Dorsolateral prefrontal cortex (tissue), 120 donors: ENCODE measurements at regions of chr7 and their contacts with region 1.

Region 1: GRCh38 chr7:44477063-44477830 is 13.2 kb downstream of the NUDCD3 start:
- DNase-seq: peak in 9 of 10 donors; percentile 34 to 69 (median 61)
- H3K4me3 ChIP-seq: peak overlapping the region in 1 of 59 donors; percentile 14
- H3K27ac ChIP-seq: peak overlapping the region in 48 of 59 donors; percentile 6 to 80 (median 55)
- H3K27me3 ChIP-seq: no peaks in the 10 kb centered on the region
- CTCF ChIP-seq: peak; percentile 82 to 99 (median 95)

Region 2: GRCh38 chr7:44072364-44073231 is 404.6 kb before region 1 on chr7:
- intact Hi-C with region 1: loop called in 1 of 2 experiments (anchors 10 kb)
- DNase-seq: peak; percentile 54 to 76 (median 62)
- H3K4me3 ChIP-seq: peak overlapping the region in 2 of 59 donors; percentile 48 to 54
- H3K27ac ChIP-seq: peak overlapping the region in 55 of 59 donors; percentile 16 to 93 (median 81)
- H3K27me3 ChIP-seq: no peaks in the 10 kb centered on the region
- CTCF ChIP-seq: peak; percentile 34 to 78 (median 62)

Region 3: GRCh38 chr7:44240983-44241510 is 236.2 kb before region 1 on chr7:
- intact Hi-C with region 1: loop called (anchors 2 to 5 kb)
- DNase-seq: peak; percentile 51 to 79 (median 71)
- H3K4me3 ChIP-seq: peak overlapping the region in 6 of 59 donors; percentile 10 to 40 (median 20)
- H3K27ac ChIP-seq: peak overlapping the region in 5 of 59 donors; percentile 26 to 53 (median 30)
- H3K27me3 ChIP-seq: no peaks in the 10 kb centered on the region
- CTCF ChIP-seq: peak in 55 of 56 donors; percentile 13 to 81 (median 66)

Region 4: DNA sequence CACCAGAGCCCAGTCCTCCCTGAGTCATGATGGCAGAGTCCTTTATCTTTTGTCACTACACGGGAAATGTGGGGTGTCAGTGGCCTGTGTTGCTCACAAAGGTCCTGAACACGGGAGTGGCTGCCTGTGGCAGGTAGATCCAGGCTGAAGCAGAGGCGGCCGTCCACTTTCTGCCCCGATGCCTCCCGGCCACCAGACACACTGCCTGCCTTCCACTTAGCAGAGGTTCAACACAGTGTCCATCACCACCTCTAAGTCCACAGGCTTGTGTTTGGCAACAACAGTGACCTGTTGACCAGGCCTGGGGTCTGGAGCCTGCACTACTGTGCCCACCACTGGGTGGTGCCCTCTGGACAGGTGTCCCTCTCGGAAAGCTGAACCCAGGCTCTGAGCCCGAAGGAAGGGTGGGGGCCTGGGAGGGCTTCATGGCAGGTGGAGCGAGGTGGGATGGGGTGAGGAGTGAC is 102.0 kb before region 1 on chr7:
- intact Hi-C with region 1: loop called in 1 of 2 experiments (anchors 5 kb)
- DNase-seq: peak in 1 of 10 donors; percentile 46
- H3K4me3 ChIP-seq: no peak overlapping the region
- H3K27ac ChIP-seq: no peak overlapping the region
- H3K27me3 ChIP-seq: no peaks in the 10 kb centered on the region
- CTCF ChIP-seq: peak in 47 of 56 donors; percentile 12 to 60 (median 39)

Region 5: GRCh38 chr7:44565097-44565794 is 88.0 kb after region 1 on chr7:
- intact Hi-C with region 1: no loop called
- DNase-seq: peak in 9 of 10 donors; percentile 53 to 80 (median 65)
- H3K4me3 ChIP-seq: no peak overlapping the region
- H3K27ac ChIP-seq: peak overlapping the region in 44 of 59 donors; percentile 4 to 89 (median 52)
- H3K27me3 ChIP-seq: no peaks in the 10 kb centered on the region
- CTCF ChIP-seq: peak; percentile 82 to 99 (median 96)